Activated naive CD4-positive, alpha-beta T cell treated with anti-CD3 and anti-CD28 coated beads for 36 hours (primary cell): ENCODE measurements at regions of chr3 and their contacts with region 1.

Region 1: DNA sequence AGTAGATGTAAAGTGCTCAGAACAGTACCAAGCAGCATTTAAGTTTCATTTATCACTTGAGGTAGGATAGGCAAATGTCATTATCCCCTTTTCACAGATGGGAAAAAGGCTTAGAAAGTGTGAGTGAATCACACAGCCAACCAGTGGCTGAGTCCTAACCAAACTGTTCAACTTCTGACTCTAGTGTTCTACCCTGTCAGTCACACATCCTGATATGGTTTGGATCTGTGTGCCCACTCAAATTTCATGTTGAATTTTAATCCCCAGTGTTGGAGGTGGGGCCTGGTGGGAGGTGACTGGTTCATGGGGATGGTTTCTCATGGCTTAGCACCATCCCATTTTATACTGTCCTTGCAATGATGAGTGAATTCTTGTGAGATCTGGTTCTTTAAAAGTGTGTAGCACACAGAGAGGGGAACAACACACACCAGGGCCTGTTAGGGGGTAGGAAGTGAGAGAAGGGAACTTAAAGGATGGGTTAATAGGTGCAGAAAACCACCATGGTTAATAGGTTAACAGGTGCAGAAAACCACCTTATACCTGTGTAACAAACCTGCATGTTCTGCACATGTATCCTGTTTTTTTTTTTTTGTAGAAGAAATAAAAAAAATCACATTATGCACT is 304.7 kb downstream of the SUCLG2 start:
- DNase-seq: peak; percentile 70
- H3K4me3 Mint-ChIP-seq: no peak overlapping the region
- H3K27ac Mint-ChIP-seq: no peak overlapping the region
- H3K4me1 Mint-ChIP-seq: peaks cover 17% of the 10 kb centered on the region
- H3K27me3 Mint-ChIP-seq: peaks cover 7% of the 10 kb centered on the region

Region 2: GRCh38 chr3:67077656-67078055 is 272.0 kb before region 1 on chr3:
- CTCF ChIA-PET with region 1: no interaction called
- intact Hi-C with region 1: loop called (anchors 1 kb)
- DNase-seq: peak; percentile 16
- H3K4me3 Mint-ChIP-seq: no peak overlapping the region
- H3K27ac Mint-ChIP-seq: no peak overlapping the region
- H3K4me1 Mint-ChIP-seq: peaks cover 50% of the 10 kb centered on the region
- H3K27me3 Mint-ChIP-seq: no peaks in the 10 kb centered on the region

Region 3: DNA sequence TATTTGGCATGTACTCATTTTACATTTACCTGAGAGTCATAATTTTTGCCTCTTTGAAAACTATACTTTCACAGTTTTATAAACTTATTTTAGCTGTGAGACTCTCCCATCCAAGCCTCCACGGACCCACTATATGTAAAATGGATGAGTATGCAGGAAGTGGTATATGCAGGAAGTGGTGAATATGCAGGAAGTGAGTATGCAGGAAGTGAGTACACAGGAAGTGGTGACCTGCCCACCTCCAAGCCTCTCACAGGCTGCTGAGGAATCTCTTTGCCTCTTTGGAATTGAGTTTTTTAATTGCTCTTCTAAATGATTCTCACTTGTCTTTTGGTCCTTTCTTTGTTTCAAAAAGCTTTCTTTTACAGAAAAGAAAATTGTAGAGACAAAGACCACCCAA is 266.4 kb before region 1 on chr3:
- CTCF ChIA-PET with region 1: no interaction called
- intact Hi-C with region 1: loop called (anchors 1 kb)
- DNase-seq: peak; percentile 79
- H3K4me3 Mint-ChIP-seq: peak overlapping the region; percentile 61
- H3K27ac Mint-ChIP-seq: peak overlapping the region; percentile 94
- H3K4me1 Mint-ChIP-seq: peaks cover 31% of the 10 kb centered on the region
- H3K27me3 Mint-ChIP-seq: no peaks in the 10 kb centered on the region

Region 4: GRCh38 chr3:67305922-67306321 is 43.7 kb before region 1 on chr3:
- CTCF ChIA-PET with region 1: no interaction called
- intact Hi-C with region 1: loop called (anchors 2 kb)
- DNase-seq: no peak
- H3K4me3 Mint-ChIP-seq: no peak overlapping the region
- H3K27ac Mint-ChIP-seq: no peak overlapping the region
- H3K4me1 Mint-ChIP-seq: peaks cover 15% of the 10 kb centered on the region
- H3K27me3 Mint-ChIP-seq: peaks cover 2% of the 10 kb centered on the region

Region 5: GRCh38 chr3:67329358-67329757 is 20.3 kb before region 1 on chr3:
- CTCF ChIA-PET with region 1: no interaction called
- intact Hi-C with region 1: loop called (anchors 1 kb)
- DNase-seq: peak; percentile 45
- H3K4me3 Mint-ChIP-seq: no peak overlapping the region
- H3K27ac Mint-ChIP-seq: no peak overlapping the region
- H3K4me1 Mint-ChIP-seq: peaks cover 16% of the 10 kb centered on the region
- H3K27me3 Mint-ChIP-seq: peaks cover 9% of the 10 kb centered on the region

Region 6: GRCh38 chr3:67334588-67334987 is 15.1 kb before region 1 on chr3:
- CTCF ChIA-PET with region 1: no interaction called
- intact Hi-C with region 1: loop called (anchors 1 kb)
- DNase-seq: no peak
- H3K4me3 Mint-ChIP-seq: no peak overlapping the region
- H3K27ac Mint-ChIP-seq: no peak overlapping the region
- H3K4me1 Mint-ChIP-seq: peaks cover 12% of the 10 kb centered on the region
- H3K27me3 Mint-ChIP-seq: peaks cover 5% of the 10 kb centered on the region

Region 7: GRCh38 chr3:68057637-68058320 is 708.1 kb after region 1 on chr3:
- CTCF ChIA-PET with region 1: no interaction called
- intact Hi-C with region 1: loop called (anchors 2 kb)
- DNase-seq: peak; percentile 85
- H3K4me3 Mint-ChIP-seq: peak overlapping the region; percentile 53
- H3K27ac Mint-ChIP-seq: peak overlapping the region; percentile 76
- H3K4me1 Mint-ChIP-seq: peaks cover 67% of the 10 kb centered on the region
- H3K27me3 Mint-ChIP-seq: no peaks in the 10 kb centered on the region